ENCODE measurements at regions of chr19 and their contacts with region 1.

Region 1: DNA sequence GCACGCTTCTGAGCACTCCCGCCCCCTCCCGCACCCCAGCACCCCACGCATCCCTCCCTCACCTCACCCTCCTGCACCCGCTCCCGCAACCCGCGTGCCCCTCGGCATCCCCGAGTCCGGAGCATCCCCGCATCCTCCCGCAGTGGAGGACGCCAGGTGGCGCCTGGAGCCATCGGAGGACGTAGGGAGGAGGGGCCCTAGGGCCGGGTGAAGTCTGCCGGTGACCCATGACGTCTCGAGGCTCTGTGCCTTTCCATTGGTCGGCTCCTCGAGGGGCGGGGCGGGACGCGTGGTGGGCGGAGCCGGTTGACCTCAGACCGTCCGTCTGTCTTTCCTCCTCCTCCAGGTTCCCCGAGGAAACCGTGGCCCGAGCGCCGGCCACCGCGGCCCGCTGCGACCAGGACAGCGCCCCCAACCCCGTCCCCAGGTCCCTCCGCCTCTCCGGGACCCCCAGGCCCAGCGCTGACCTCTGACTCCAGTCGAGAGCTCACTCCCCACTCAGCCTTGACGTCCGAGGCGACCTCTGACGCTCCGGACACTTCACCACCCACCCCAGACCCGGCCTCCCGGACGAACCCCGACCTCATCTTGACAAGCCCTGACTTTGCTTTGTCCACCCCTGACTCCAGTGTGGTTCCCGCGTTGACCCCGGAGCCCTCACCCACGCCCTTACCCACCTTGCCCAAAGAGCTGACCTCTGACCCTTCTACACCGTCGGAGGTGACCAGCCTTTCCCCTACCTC is 19.9 kb downstream of the SBK2 start:
- DNase-seq: peak; percentile 95 to 97 (median 96)
- ATAC-seq: peak; percentile 100
- H3K4me3 ChIP-seq: peak overlapping the region in 1 of 2 donors; percentile 0
- H3K27ac ChIP-seq: peak overlapping the region; percentile 46 to 82 (median 74)
- H3K4me1 ChIP-seq: peaks cover 4% of the 10 kb centered on the region
- H3K27me3 ChIP-seq: peaks cover 0 to 5% of the 10 kb centered on the region in 2 donors
- CTCF ChIP-seq: peak; percentile 77 to 98 (median 96)
- POLR2A ChIP-seq: peak in 2 of 3 donors; percentile 39 to 58

Region 2: DNA sequence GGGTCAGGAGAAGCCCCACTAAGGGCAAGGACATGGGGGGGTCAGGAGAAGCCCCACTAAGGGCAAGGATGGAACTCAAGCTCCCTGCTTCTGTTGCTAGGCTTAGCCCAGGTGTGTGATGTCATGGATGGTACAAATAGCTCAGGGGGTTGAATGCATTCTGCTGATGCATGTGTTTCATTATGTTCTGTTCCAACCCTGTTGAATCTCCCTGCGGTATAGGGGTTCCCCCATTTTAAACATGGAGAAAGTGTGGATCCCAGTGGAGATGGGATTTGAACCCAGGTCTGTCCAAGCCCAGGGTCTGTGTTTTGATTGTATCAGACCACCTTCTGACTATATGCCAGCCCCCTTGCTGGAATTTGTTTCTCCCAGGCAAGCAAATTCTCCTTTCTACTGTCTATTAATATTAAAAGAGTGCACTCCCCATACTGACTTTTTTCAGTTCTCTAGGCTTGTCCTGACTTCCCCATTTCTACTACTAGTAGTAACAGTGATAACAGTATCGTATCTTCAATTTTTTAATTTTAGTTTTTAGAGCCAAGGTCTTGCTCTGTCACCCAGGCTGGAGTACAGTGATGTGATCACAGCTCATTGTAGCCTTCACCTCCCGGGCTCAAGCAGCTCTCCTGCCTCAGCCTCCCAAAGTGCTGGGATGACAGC is 95.1 kb after region 1 on chr19:
- intact Hi-C with region 1: loop called (anchors 5 kb)
- DNase-seq: no peak
- ATAC-seq: no peak
- H3K4me3 ChIP-seq: no peak overlapping the region
- H3K27ac ChIP-seq: no peak overlapping the region
- H3K4me1 ChIP-seq: peaks cover 15% of the 10 kb centered on the region
- H3K27me3 ChIP-seq: no peaks in the 10 kb centered on the region
- CTCF ChIP-seq: no peak
- POLR2A ChIP-seq: no peak

Region 3: GRCh38 chr19:55632463-55632834 is 115.4 kb after region 1 on chr19:
- intact Hi-C with region 1: loop called (anchors 5 kb)
- DNase-seq: peak; percentile 94 to 97 (median 96)
- ATAC-seq: peak; percentile 72
- H3K4me3 ChIP-seq: no peak overlapping the region
- H3K27ac ChIP-seq: peak overlapping the region in 3 of 4 donors; percentile 7 to 47 (median 44)
- H3K4me1 ChIP-seq: peaks cover 37% of the 10 kb centered on the region
- H3K27me3 ChIP-seq: no peaks in the 10 kb centered on the region
- CTCF ChIP-seq: peak; percentile 65 to 91 (median 88)
- POLR2A ChIP-seq: no peak